Mammary epithelial cell (primary cell): ENCODE measurements at regions of chr18 and their contacts with region 1.

Region 1: GRCh38 chr18:54679318-54680149 is 88.5 kb downstream of the DYNAP start:
- DNase-seq: peak; percentile 64
- H3K4me3 ChIP-seq: no peak overlapping the region
- H3K27ac ChIP-seq: no peak overlapping the region
- H3K4me1 ChIP-seq: no peaks in the 10 kb centered on the region
- H3K27me3 ChIP-seq: no peaks in the 10 kb centered on the region
- CTCF ChIP-seq: peak; percentile 55 to 63

Region 2: DNA sequence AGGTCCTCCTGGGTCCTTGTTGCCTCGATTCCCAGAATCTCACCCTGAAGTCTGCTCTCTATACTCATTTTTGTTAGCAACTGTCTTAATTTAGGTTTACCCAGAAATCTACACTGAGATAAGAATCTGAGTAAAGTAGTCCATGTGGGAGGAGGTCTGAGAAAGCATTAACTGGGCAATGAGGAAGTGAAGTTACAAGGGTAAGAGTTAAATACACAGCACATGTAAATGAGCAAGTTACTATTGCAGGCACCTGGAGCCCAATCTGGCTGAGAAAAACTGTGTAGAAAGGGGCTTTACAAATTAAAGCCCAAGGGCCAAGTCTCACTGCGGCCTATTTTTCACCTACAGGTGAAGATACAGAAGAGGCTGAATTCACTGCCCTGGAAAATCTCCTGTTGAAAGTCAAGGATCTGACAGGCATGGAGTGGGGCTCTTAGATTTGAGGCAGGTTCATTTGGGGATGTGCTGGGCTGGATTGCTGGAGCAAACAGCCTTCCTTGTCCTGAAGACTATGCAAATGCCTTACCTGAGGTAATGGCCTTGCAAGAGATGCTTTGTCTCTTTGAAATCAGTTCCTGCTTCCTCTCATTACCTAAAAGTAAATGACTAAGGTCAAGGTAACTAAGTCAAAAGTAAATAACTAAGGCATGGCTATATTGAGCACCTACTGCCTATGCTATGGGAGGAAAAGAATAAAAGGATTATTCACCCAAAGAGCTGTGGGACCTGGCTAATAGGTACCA is 172.8 kb before region 1 on chr18:
- CTCF ChIA-PET with region 1: no interaction called
- dilution Hi-C with region 1: no loop called
- in situ Hi-C with region 1: no loop called
- intact Hi-C with region 1: no loop called
- DNase-seq: no peak
- H3K4me3 ChIP-seq: no peak overlapping the region
- H3K27ac ChIP-seq: no peak overlapping the region
- H3K4me1 ChIP-seq: no peaks in the 10 kb centered on the region
- H3K27me3 ChIP-seq: no peaks in the 10 kb centered on the region
- CTCF ChIP-seq: no peak

Region 3: DNA sequence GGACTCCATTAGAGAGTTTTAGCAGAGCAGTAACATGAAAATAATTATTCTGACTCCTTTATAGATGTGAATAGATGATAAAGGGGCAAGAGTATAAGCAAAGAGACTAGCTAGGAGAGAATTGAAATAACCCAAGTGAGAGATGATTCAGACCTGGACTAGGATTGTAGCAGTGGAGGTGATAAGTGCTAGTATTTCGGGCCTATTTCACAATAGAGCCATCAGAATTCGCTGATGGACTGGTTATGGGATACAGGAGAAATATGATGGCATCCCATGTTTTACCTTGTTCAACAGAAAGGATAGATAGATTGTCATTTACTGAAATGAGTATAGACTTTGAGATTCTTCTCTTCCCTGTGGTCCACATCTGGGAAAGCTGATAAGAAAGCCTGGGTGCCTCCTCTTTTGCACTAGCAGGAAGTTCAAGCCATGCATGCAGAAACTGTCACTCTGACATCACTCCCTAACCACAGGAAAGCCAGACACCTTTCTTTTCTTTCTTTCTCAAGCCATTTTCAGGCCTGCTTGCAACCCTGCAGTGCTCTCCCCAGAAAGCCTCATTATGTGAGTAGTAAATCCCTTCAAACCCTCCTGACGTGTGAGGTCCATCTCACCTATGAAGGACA is 63.2 kb before region 1 on chr18:
- CTCF ChIA-PET with region 1: no interaction called
- dilution Hi-C with region 1: no loop called
- in situ Hi-C with region 1: no loop called
- intact Hi-C with region 1: no loop called
- DNase-seq: no peak
- H3K4me3 ChIP-seq: no peak overlapping the region
- H3K27ac ChIP-seq: no peak overlapping the region
- H3K4me1 ChIP-seq: peaks cover 9% of the 10 kb centered on the region
- H3K27me3 ChIP-seq: peaks cover 2% of the 10 kb centered on the region
- CTCF ChIP-seq: no peak

Region 4: DNA sequence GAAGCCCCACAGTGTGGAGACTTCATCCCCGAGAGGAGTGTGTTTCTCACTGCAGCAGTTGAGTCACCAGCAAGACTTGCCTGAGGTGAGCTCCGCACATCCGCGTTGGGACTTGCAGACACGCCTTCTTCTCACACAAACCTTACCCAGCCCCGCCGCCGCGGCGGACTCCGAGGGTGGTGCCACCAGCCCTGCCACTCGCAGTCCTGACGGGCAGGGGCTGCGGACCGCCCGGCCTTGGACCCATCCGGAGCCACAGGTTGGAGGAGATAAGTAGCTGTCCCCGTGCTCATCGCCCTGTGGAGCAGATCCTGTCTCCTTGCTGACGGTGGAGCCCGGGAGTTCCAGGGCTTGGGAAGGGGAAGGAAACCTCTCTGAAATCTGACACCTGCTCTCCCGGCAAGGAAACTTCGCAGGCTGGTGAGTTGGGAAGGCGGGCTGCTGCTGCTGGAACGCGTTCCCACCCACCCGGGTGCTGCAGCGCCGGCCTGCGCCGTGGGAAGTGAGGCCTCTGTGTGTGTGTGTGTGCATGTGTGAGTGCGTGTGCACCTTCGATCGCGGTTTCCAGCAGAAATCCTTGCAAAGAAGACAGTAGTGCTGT is 148.8 kb after region 1 on chr18 and contains the start of gene RAB27B:
- CTCF ChIA-PET with region 1: no interaction called
- dilution Hi-C with region 1: no loop called
- in situ Hi-C with region 1: no loop called
- intact Hi-C with region 1: loop called (anchors 1 kb)
- DNase-seq: peak; percentile 96
- H3K4me3 ChIP-seq: peak within 1 kb of the TSS; percentile 76 to 85 (median 79)
- H3K27ac ChIP-seq: peak within 1 kb of the TSS; percentile 90
- H3K4me1 ChIP-seq: peaks cover 27% of the 10 kb centered on the region
- H3K27me3 ChIP-seq: no peaks in the 10 kb centered on the region
- CTCF ChIP-seq: no peak
- total RNA-seq, gene RAB27B: 1.8 to 19.3 TPM

Region 5: GRCh38 chr18:54880395-54881095 is 201.0 kb after region 1 on chr18:
- CTCF ChIA-PET with region 1: no interaction called
- dilution Hi-C with region 1: no loop called
- in situ Hi-C with region 1: no loop called
- intact Hi-C with region 1: loop called (anchors 10 kb)
- DNase-seq: peak; percentile 72
- H3K4me3 ChIP-seq: no peak overlapping the region
- H3K27ac ChIP-seq: no peak overlapping the region
- H3K4me1 ChIP-seq: no peaks in the 10 kb centered on the region
- H3K27me3 ChIP-seq: no peaks in the 10 kb centered on the region
- CTCF ChIP-seq: no peak

Region 6: DNA sequence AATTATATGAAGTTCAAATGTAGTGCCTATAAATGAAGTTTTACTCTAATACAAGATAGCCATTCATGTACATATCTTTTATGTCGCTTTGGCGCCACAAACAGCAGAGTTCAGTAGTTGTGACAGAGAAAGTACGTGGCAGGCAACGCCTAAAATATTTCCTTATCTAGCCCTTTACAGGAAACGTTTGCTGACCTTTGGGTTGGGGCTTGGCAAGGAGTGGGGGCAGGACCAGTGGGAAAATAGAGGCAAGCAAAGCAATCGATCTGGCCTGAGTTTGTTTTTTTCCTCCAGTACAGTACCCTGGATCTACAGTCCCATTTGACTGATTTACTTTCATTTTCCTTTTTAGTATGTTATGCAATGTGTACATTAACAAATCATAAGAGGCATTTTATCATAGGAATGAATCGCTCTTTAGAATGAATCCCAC is 266.6 kb after region 1 on chr18:
- CTCF ChIA-PET with region 1: interaction called, 4 read pairs
- dilution Hi-C with region 1: no loop called
- in situ Hi-C with region 1: loop called in 1 of 2 experiments (anchors 5 kb)
- intact Hi-C with region 1: loop called (anchors 1 kb)
- DNase-seq: no peak
- H3K4me3 ChIP-seq: peak overlapping the region; percentile 27 to 36 (median 34)
- H3K27ac ChIP-seq: no peak overlapping the region
- H3K4me1 ChIP-seq: no peaks in the 10 kb centered on the region
- H3K27me3 ChIP-seq: no peaks in the 10 kb centered on the region
- CTCF ChIP-seq: no peak

Region 7: GRCh38 chr18:54983041-54983686 is 303.6 kb after region 1 on chr18:
- CTCF ChIA-PET with region 1: interaction called, 3 read pairs
- dilution Hi-C with region 1: loop called (anchors 25 kb)
- in situ Hi-C with region 1: loop called (anchors 5 kb)
- intact Hi-C with region 1: loop called (anchors 1 kb)
- DNase-seq: peak; percentile 48
- H3K4me3 ChIP-seq: no peak overlapping the region
- H3K27ac ChIP-seq: no peak overlapping the region
- H3K4me1 ChIP-seq: no peaks in the 10 kb centered on the region
- H3K27me3 ChIP-seq: no peaks in the 10 kb centered on the region
- CTCF ChIP-seq: peak; percentile 52 to 62